ENCODE measurements at regions of chr14 and their contacts with region 1.

Region 1: DNA sequence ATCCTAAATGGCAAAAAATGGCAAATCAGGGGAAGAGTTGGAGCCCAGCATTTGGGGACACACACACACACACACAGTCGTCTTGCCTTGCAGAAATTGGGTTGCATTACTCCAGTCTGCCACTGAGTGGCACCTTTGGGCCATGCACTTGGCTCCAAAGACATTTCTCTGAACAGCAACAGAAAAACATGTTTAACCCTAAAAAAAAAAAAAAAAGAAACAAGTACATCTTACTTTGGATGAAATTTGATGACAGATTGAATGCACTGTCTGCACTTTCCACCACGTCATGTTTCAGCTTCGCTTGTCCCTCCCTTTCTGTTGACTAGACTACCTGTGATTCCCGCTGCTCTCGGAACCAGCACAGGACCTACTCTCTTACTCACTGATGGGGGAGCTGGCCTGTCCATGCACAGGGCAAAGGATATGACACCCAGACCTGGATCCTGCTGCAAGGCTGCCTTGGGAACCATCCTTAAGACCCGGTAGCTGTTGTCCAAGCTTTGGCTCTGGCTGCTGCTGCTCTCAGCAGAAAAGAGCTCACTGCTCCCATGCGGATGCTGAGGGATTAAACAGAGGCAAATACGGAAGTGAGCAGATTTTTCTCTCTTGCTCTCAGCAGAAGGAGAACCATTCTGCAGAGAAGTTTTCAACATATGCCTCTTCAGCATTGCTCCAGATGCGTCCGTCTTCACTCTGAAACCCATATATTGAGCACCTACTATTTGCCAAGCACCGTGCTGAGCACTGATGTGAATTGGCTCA is 376.8 kb downstream of the DPF3 start:
- DNase-seq: peak; percentile 50 to 85 (median 76)
- ATAC-seq: peak; percentile 60 to 73
- H3K4me3 ChIP-seq: no peak overlapping the region
- H3K27ac ChIP-seq: no peak overlapping the region
- H3K4me1 ChIP-seq: peaks cover 2% of the 10 kb centered on the region
- H3K27me3 ChIP-seq: no peaks in the 10 kb centered on the region

Region 2: DNA sequence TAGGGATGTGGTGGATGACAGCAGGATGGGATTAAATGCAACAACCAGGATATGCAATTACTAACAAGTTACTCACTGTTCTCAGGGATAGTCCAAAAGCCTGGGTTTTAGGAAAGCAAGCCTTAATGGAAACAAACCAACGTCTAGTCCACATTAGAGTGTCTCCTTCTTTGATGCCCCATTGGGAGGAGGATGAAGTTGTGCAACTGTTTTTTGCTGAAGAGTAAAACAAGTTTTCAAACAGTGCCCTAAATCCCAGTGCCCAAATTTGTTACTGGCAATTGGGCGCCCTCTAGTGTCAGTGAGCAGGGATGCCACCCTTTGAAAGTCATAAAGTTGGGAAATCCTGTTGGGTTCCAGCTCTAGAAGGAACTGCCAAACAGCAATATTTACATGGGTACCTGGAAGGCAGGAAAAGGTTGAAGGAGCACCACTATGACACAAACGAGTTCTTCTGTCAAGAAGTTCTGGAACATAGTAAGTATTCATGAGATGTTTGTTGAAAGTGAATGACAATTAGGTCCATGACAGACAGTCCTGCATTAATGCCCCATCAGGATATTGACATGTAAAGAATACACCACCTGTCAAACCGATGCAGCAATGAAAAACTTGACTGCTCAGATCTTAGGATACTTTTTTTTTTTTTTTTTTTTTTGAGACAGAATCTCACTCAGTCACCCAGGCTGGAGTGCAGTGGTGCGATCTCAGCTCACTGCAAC is 387.9 kb after region 1 on chr14:
- intact Hi-C with region 1: loop called (anchors 2 to 5 kb)
- DNase-seq: peak; percentile 49 to 73 (median 58)
- ATAC-seq: peak; percentile 65 to 78
- H3K4me3 ChIP-seq: no peak overlapping the region
- H3K27ac ChIP-seq: no peak overlapping the region
- H3K4me1 ChIP-seq: peaks cover 5% of the 10 kb centered on the region
- H3K27me3 ChIP-seq: no peaks in the 10 kb centered on the region

Region 3: DNA sequence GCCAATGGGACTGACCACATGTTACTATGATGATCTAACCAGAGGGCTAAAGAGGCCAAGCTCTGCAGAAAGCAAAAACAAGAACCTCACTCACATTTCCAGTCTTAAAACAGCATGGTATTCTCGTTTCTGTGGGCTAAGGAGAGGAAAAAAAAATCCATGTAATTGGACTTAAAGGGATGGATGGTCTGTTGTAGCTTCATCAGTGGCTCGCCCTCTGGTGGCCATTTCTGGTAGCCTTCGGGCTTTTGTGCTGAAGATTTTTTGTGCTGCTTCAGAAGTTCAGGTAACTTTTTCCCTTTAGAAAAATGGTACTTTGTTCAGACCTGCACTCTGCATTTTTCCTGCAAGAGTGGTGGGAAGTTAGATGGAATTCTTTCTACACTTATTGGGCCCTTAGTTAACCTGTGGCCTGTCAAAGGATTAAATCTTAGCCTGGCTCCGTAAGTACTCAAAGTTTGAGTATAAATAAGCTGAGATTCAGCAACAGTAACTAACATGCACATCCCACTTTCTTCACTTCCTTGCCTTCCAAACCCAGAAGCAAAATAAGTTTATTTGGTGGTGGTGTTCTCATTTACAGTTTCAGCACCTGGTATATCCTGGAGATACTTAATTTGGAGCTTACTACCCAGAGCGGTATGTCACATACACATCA is 431.5 kb after region 1 on chr14:
- intact Hi-C with region 1: loop called (anchors 2 to 5 kb)
- DNase-seq: peak; percentile 57 to 90 (median 78)
- ATAC-seq: no peak
- H3K4me3 ChIP-seq: no peak overlapping the region
- H3K27ac ChIP-seq: no peak overlapping the region
- H3K4me1 ChIP-seq: no peaks in the 10 kb centered on the region
- H3K27me3 ChIP-seq: no peaks in the 10 kb centered on the region